AG04449 (cell line): ENCODE measurements at regions of chr10 and their contacts with region 1.

Region 1: DNA sequence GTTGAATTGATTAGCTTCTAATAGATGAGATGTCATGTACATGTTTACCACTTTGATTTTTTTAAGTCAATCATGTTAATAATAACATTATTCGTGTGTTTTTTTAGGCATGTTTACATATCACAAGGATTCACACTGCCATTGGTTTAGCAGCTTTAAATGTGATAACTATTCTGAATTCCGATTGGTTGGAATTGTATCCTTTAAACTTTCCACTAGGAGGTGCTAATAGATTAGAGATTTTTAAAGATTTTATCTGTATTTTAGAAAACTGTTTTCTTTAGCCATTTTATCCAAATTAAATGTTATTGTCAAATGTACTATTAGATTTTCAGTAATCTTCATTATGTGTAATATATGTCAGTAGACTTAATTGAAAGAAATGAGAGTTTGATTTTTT is 83.2 kb downstream of the HECTD2 start:
- DNase-seq: peak; percentile 16
- H3K4me3 ChIP-seq: no peak overlapping the region
- CTCF ChIP-seq: no peak

Region 2: DNA sequence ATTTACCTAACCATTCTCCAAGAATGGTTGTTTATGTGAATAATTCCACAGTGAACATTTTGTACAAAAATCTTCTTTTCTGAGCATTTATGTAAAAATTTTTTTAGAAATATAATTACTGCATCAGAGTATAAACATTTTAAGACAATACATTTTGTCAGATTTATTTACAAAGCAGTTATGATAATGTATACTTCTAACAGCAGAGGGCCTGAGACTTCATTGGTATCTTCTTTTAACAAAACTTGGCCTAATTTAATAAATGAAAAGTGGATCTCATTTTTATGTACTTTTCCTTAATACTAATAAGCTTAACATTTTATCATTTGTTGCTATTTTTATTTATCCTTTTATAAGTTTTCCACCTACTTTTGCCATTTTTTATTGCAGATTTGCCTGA is 13.7 kb before region 1 on chr10:
- CTCF ChIA-PET with region 1: interaction called, 15 read pairs
- POLR2A ChIA-PET with region 1: no interaction called
- DNase-seq: no peak
- H3K4me3 ChIP-seq: no peak overlapping the region
- CTCF ChIP-seq: no peak

Region 3: DNA sequence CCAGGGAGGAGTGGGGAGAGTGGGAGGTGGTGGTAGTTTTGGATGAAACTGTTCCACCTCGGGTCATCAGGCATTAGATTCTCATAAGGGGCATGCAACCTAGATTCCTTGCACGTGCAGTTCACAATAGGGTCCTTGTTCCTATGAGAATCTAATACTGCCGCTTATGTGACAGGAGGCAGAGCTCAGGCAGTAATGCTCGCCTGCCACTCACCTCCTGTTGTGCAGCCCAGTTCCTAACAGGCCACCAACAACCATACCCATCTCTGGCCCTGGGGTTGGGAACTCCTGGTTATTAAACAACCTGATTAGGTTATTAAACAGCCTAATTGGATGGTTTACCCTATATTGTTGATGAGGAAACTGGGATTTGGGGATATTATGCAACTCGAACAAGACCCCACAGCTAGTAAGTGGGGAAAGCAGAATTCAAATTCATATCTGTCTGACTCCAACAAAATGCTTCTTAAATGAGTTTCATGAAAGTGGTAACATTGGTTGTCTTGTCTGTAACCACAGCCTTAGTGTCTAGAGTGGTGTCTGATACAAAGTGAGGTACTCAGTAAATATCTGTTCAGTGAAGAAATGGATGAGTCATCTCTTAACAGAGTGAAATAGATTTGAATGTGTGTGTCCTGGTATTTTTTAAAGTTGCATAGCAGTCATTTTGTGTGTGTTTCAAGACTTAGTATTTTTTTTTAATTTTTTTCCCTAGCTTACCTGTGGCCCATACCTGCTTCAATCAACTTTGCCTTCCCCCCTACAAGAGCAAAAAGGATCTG is 18.4 kb after region 1 on chr10:
- CTCF ChIA-PET with region 1: interaction called, 19 read pairs
- POLR2A ChIA-PET with region 1: no interaction called
- DNase-seq: peak; percentile 75
- H3K4me3 ChIP-seq: no peak overlapping the region
- CTCF ChIP-seq: no peak

Region 4: DNA sequence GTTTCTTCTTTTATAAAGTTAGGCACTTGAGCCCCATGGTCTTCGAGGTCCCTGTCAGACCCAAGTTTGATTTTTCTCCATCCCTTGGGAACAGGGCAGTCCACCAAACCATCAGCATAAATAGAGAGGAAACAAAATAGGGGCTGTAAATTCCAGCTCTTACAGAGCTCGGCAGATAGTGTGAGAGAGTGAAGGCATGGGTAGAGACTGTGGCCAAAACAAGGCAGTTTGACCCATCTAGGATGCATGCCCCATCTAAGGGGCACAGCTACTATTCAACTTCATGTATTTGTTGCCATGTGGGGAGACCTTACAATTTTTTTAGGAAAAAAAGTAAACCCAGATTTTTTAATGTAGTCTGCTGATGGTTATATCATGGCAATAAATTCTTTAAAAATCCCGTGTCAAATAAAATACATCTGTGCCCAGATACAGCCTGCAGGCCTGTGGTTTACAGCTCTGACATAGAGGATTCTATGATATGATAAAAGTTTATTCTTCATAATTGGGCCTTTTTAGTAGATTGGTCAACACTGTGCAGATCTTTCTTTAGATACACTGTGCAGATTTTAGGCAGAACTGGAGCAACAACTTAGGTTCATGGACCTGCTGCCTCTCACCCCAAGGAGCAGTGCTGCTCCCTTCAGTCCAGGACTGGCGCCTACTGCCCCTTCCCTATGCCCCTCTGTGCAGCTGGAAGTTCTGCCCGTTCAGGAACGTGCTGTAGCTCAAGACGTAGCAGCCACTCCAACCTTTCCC is 134.2 kb after region 1 on chr10:
- CTCF ChIA-PET with region 1: interaction called, 163 read pairs
- POLR2A ChIA-PET with region 1: interaction called, 28 read pairs
- DNase-seq: no peak
- H3K4me3 ChIP-seq: peak overlapping the region; percentile 79
- CTCF ChIP-seq: peak; percentile 3

Region 5: GRCh38 chr10:91694170-91694794 is 201.0 kb after region 1 on chr10:
- CTCF ChIA-PET with region 1: interaction called, 89 read pairs
- POLR2A ChIA-PET with region 1: no interaction called
- DNase-seq: no peak
- H3K4me3 ChIP-seq: no peak overlapping the region
- CTCF ChIP-seq: peak; percentile 72